Activated CD4-positive, alpha-beta T cell treated with anti-CD3 and anti-CD28 coated beads, Interleukin-2, amount 10 ng/mL, durations not matched to agents 7 days and 5 days (primary cell): ENCODE measurements at regions of chr2 and their contacts with region 1.

Region 1: DNA sequence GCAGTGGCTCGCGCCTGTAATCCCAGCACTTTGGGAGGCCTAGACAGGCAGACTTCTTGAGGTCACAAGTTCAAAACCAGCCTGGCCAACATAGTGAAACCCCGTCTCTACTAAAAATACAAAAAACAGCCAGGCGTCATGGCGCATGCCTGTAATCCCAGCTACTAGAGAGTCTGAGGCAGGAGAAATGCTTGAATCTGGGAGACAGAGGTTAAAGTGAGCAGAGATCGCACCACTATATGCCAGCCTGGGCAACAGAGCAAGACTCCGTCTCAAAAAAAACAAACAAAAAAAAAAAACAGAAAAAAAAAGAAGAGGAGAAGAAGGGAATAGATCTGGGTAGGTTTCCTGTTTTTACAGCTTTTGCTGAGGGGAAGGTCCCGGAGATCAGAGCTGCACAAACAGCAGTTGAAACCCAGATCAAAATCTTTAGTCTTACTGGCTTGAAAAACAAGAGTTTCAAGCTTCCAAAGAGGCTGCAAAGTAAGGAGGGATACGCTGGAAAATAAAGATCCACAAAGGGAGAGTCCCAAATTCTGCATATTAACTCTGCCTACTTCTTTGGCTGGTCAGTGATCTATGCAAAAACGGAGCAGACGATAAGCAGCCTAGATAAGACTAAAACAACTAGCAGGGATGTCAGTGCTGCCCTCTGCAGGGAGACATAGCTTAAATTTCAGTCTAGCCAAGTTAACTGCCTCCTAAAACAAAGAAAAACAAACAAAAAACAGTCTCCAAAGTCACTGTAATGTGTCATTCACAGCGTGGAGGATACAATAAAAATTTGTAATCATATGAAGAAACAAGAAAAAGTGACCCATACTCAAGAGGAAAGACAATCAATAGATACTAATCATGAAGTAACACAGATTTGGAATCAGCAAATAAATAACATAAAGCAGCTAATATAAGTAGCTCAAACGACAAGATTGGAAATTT is 74.1 kb downstream of the TLK1 start:
- DNase-seq: peak; percentile 72
- H3K4me3 Mint-ChIP-seq: peak overlapping the region; percentile 66
- H3K27ac Mint-ChIP-seq: peak overlapping the region; percentile 83
- H3K4me1 Mint-ChIP-seq: peaks cover 62% of the 10 kb centered on the region
- H3K27me3 Mint-ChIP-seq: no peaks in the 10 kb centered on the region

Region 2: GRCh38 chr2:170973492-170974303 is 112.9 kb before region 1 on chr2:
- CTCF ChIA-PET with region 1: interaction called, 11 read pairs
- POLR2A ChIA-PET with region 1: no interaction called
- DNase-seq: peak; percentile 77
- H3K4me3 Mint-ChIP-seq: peak overlapping the region; percentile 72
- H3K27ac Mint-ChIP-seq: peak overlapping the region; percentile 83
- H3K4me1 Mint-ChIP-seq: peaks cover 20% of the 10 kb centered on the region
- H3K27me3 Mint-ChIP-seq: no peaks in the 10 kb centered on the region

Region 3: DNA sequence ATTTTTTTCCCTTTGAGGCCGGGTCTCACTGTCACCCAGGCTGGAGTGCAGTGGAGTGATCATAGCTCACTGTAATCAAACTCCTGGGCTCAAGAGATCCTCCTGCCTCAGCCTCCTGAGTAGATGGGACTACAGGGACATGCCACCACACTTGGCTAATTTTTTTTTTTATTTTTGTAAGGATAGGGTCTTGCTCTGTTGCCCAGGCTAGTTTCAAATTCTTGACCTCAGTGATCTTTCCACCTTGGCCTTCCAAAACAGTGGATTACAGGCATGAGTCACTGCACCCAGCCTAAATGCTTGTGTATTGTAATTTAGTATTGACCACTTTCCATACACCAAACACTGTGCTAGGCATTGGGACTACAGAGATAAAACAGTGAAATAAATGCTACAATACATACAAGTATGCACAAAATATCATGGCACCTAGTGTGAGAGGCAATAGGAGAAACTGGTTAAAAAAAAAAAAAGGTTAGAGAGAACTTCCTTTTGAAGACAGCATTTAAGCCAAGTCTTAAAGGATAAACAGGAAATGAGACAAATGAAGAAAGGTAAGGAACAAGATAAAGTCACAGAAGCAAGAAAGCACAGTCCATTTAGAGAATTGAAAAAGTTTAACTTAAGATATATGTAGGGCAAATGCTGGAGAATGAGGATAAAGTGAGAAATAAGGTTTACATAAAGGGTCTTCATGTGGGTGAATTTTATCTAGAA is 44.2 kb before region 1 on chr2:
- CTCF ChIA-PET with region 1: no interaction called
- POLR2A ChIA-PET with region 1: no interaction called
- DNase-seq: no peak
- H3K4me3 Mint-ChIP-seq: no peak overlapping the region
- H3K27ac Mint-ChIP-seq: peak overlapping the region; percentile 73
- H3K4me1 Mint-ChIP-seq: peaks cover 34% of the 10 kb centered on the region
- H3K27me3 Mint-ChIP-seq: no peaks in the 10 kb centered on the region